Cardiac septum (tissue), 1 donor: ENCODE measurements at regions of chr1 and their contacts with region 1.

Region 1: DNA sequence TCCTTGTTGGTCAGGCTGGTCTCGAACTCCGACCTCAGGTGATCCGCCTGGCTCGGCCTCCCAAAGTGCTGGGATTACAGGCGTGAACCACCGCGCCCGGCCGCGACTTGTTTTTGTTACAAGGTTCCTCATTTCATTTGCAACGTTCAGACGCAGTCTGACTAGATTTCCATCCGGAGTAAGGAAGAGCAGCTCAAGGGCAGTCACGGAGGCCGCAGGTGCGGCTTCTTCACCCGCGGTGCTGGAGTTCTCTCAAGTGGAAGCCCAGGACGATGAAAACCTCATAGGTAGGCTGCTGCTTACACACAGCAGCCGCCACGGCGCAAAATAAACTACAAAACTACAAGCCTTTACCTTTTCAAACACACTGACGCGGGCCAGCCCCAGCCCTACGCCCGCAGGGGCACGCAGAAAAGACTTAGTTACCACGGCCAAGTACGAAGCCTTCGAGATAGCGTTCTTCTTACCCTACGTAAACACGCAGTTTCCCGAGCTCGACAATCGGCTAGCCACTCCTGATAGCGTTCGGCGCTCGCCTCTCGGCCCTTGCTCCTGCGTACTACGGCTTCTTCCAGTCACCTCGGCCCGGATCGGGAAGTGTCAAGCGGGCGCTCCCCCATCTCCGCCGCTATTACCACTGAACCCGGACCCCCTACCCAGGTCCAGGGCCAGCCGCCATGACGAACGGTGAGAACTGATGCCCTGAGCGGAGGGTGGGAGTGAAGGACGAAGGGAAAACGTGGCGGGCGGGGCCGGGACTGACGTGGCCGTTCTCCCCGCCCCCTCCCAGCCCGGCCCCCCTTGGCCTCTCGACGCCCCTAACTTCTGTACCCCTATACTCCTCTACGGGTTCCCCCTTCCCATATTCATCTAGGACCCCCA is at the start of gene TMEM167B:
- DNase-seq: peak; percentile 97
- total RNA-seq, gene TMEM167B: 37.4 TPM

Region 2: DNA sequence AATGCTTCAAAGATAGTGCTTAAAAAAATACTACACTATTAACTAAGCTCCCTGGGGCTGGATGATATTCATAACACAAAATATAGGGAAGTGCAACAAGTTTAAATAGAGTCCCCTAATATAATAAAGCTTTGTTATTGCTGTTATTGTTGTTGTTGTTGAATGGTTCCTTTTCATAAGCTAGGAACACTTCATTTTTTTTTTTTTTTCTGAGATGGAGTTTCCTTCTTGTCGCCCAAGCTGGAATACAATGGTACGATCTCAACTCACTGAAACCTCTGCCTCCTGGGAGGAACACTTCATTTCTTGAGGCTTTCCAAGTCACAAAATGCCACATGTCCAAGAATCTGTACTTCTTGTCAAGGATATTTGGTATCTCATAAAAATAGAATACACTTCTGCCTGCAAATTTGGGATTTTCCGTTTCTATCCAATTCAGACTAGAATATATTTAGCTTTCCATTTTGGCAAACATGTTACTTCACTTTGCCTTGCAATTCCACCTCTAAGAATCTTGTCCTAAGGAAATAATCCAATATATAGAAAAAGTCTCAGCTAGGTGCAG is 69.7 kb before region 1 on chr1:
- intact Hi-C with region 1: no loop called
- DNase-seq: no peak

Region 3: GRCh38 chr1:109075531-109076490 is 14.6 kb before region 1 on chr1 and contains the start of gene TAF13:
- intact Hi-C with region 1: loop called (anchors 1 kb)
- DNase-seq: peak; percentile 99
- total RNA-seq, gene TAF13: 65.0 TPM